Common myeloid progenitor, CD34-positive (primary cell): ENCODE measurements at regions of chr1 and their contacts with region 1.

Region 1: DNA sequence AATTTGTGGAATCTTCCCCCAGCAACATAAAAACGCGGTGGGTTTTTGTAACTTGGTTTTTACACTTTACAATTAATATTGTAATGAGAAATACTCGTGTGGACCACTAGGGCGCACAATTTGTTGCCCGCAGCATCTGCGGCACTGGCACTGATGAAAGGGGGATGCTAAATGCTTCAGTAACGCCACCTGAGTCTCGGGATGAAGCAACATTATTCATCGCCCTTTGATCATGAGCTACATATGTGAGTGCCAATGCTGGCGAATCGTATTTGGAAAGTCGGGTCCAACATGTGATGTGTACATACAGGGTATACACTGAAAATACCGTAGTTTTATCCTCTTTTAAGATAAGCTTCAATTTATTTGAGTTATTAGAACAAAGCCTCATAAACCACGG is 34.2 kb upstream of the COX20 start:
- DNase-seq: peak; percentile 76 to 82 (median 78)
- H3K4me3 ChIP-seq: peak overlapping the region in 1 of 7 experiments; percentile 11
- H3K27ac ChIP-seq: no peak overlapping the region
- H3K4me1 ChIP-seq: peaks cover 0 to 9% (median 2%) of the 10 kb centered on the region in 4 experiments
- H3K27me3 ChIP-seq: peaks cover 0 to 15% (median 2%) of the 10 kb centered on the region in 5 experiments

Region 2: DNA sequence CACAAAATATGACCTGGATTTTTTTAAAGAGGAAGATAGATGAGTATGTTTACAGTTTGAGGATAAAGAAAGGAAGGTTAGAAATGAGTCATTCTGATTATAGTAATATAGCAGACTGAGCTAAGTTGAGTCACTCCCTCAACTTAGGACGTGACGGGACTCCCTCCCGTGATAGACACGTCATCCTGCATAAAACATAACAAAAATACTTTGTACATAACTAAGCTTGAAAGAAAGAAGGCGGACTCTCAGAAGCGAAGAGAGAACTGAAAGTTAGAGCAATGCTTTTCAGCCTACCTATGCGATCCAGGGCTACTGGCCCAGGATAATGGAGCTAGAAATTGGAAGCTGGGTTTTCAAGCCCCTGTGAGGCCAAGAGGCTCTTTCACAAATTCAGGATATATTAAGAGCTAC is 201.3 kb before region 1 on chr1:
- CTCF ChIA-PET with region 1: interaction called, 91 read pairs
- POLR2A ChIA-PET with region 1: interaction called, 3 read pairs
- DNase-seq: peak in 2 of 3 donors; percentile 6 to 25
- H3K4me3 ChIP-seq: no peak overlapping the region
- H3K27ac ChIP-seq: no peak overlapping the region
- H3K4me1 ChIP-seq: no peaks in the 10 kb centered on the region
- H3K27me3 ChIP-seq: peaks cover 0 to 3% (median 0%) of the 10 kb centered on the region in 5 experiments

Region 3: DNA sequence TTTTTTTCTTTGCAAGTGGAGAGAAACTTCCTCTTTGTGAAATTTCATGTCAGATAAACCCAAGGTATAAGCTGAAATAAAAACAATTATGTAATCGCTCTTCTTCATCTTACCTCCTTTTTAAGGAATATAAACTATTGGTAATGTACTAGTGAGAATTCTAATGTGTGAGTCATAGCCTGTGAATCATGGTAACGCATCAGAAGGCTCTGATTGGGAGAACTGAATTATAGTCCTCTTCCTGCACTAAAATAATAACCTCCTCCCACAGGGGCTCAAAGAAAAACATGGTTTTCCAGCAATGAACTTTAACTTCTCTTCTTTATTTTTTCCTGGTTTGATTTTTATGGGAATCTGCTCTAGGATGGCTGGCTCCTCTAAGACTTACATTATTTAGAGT is 22.9 kb before region 1 on chr1:
- CTCF ChIA-PET with region 1: no interaction called
- POLR2A ChIA-PET with region 1: no interaction called
- DNase-seq: peak in 2 of 3 donors; percentile 20 to 27
- H3K4me3 ChIP-seq: no peak overlapping the region
- H3K27ac ChIP-seq: no peak overlapping the region
- H3K4me1 ChIP-seq: no peaks in the 10 kb centered on the region
- H3K27me3 ChIP-seq: no peaks in the 10 kb centered on the region

Region 4: DNA sequence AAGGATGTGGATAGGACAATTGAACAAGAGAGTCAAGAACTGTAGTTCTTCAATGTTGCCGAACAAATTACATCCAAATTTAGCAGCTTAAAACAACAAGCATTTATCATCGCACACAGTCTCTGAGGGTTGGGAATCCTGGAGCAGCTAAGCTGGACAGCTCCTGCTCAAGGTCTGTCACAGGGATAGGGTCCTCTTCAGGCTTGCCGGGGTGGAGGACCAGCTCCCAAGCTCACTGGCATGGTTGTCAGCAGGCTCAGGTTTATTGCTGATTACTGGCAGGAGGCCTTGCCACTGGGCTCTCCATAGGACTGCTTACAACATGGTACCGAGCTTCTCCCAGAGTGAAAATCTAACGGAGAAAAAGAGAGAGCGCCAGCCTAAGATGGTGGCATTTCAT is 12.1 kb after region 1 on chr1:
- CTCF ChIA-PET with region 1: interaction called, 11 read pairs
- POLR2A ChIA-PET with region 1: no interaction called
- DNase-seq: no peak
- H3K4me3 ChIP-seq: no peak overlapping the region
- H3K27ac ChIP-seq: no peak overlapping the region
- H3K4me1 ChIP-seq: peaks cover 0 to 18% (median 9%) of the 10 kb centered on the region in 4 experiments
- H3K27me3 ChIP-seq: peaks cover 0 to 9% (median 2%) of the 10 kb centered on the region in 5 experiments

Region 5: GRCh38 chr1:244881552-244882280 is 80.5 kb after region 1 on chr1:
- CTCF ChIA-PET with region 1: no interaction called
- POLR2A ChIA-PET with region 1: no interaction called
- DNase-seq: no peak
- H3K4me3 ChIP-seq: no peak overlapping the region
- H3K27ac ChIP-seq: no peak overlapping the region
- H3K4me1 ChIP-seq: no peaks in the 10 kb centered on the region
- H3K27me3 ChIP-seq: no peaks in the 10 kb centered on the region